PC-9 (cell line): ENCODE measurements at regions of chr2 and their contacts with region 1.

Region 1: GRCh38 chr2:164771897-164772296 is 69.7 kb downstream of the COBLL1 start:
- DNase-seq: no peak
- H3K4me3 ChIP-seq: no peak overlapping the region
- H3K27ac ChIP-seq: no peak overlapping the region
- H3K4me1 ChIP-seq: no peaks in the 10 kb centered on the region
- H3K27me3 ChIP-seq: no peaks in the 10 kb centered on the region
- CTCF ChIP-seq: no peak

Region 2: DNA sequence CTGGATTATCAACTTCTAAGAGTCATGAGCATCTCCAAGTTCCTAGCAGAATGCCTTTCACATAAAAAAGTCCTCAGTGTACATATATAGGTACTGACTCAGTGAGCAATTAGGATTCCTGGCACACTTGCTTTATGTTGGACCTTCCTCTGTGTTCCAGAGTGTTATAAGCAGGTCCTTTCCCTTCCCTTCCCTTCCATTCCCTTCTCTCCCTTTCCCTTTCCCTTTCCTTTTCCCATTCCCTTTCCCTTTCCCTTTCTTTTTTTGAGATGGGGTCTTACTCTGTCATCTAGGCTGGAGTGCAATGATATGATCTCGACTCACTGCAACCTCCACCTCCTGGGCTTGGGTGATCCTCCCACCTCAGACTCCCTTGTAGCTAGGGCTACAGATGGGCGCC is 383.3 kb after region 1 on chr2:
- CTCF ChIA-PET with region 1: no interaction called
- POLR2A ChIA-PET with region 1: interaction called, 12 read pairs
- intact Hi-C with region 1: no loop called
- DNase-seq: no peak
- H3K4me3 ChIP-seq: no peak overlapping the region
- H3K27ac ChIP-seq: no peak overlapping the region
- H3K4me1 ChIP-seq: no peaks in the 10 kb centered on the region
- H3K27me3 ChIP-seq: no peaks in the 10 kb centered on the region
- CTCF ChIP-seq: no peak